Adrenal gland (tissue), 19 donors: ENCODE measurements at regions of chr1 and their contacts with region 1.

Region 1: GRCh38 chr1:178310685-178311105 is 186.1 kb downstream of the CLEC20A start:
- DNase-seq: peak in 2 of 7 donors; percentile 7 to 26
- H3K4me3 ChIP-seq: no peak overlapping the region
- H3K27ac ChIP-seq: no peak overlapping the region
- H3K4me1 ChIP-seq: no peaks in the 10 kb centered on the region
- H3K27me3 ChIP-seq: no peaks in the 10 kb centered on the region
- CTCF ChIP-seq: peak; percentile 62 to 88 (median 82)
- POLR2A ChIP-seq: no peak

Region 2: GRCh38 chr1:178267646-178268094 is 43.0 kb before region 1 on chr1:
- intact Hi-C with region 1: no loop called
- DNase-seq: no peak
- H3K4me3 ChIP-seq: no peak overlapping the region
- H3K27ac ChIP-seq: no peak overlapping the region
- H3K4me1 ChIP-seq: peaks cover 0 to 7% of the 10 kb centered on the region in 2 donors
- H3K27me3 ChIP-seq: no peaks in the 10 kb centered on the region
- CTCF ChIP-seq: no peak
- POLR2A ChIP-seq: no peak

Region 3: GRCh38 chr1:178501705-178502329 is 191.1 kb after region 1 on chr1:
- intact Hi-C with region 1: loop called (anchors 5 kb)
- DNase-seq: peak; percentile 68 to 87 (median 78)
- H3K4me3 ChIP-seq: no peak overlapping the region
- H3K27ac ChIP-seq: no peak overlapping the region
- H3K4me1 ChIP-seq: no peaks in the 10 kb centered on the region
- H3K27me3 ChIP-seq: no peaks in the 10 kb centered on the region
- CTCF ChIP-seq: peak; percentile 71 to 89 (median 83)
- POLR2A ChIP-seq: no peak

Region 4: GRCh38 chr1:178962853-178963711 is 652.4 kb after region 1 on chr1:
- intact Hi-C with region 1: loop called in 1 of 2 experiments (anchors 10 kb)
- DNase-seq: no peak
- H3K4me3 ChIP-seq: no peak overlapping the region
- H3K27ac ChIP-seq: no peak overlapping the region
- H3K4me1 ChIP-seq: no peaks in the 10 kb centered on the region
- H3K27me3 ChIP-seq: no peaks in the 10 kb centered on the region
- CTCF ChIP-seq: no peak
- POLR2A ChIP-seq: no peak